ENCODE measurements at regions of chr5 and their contacts with region 1.

Region 1: DNA sequence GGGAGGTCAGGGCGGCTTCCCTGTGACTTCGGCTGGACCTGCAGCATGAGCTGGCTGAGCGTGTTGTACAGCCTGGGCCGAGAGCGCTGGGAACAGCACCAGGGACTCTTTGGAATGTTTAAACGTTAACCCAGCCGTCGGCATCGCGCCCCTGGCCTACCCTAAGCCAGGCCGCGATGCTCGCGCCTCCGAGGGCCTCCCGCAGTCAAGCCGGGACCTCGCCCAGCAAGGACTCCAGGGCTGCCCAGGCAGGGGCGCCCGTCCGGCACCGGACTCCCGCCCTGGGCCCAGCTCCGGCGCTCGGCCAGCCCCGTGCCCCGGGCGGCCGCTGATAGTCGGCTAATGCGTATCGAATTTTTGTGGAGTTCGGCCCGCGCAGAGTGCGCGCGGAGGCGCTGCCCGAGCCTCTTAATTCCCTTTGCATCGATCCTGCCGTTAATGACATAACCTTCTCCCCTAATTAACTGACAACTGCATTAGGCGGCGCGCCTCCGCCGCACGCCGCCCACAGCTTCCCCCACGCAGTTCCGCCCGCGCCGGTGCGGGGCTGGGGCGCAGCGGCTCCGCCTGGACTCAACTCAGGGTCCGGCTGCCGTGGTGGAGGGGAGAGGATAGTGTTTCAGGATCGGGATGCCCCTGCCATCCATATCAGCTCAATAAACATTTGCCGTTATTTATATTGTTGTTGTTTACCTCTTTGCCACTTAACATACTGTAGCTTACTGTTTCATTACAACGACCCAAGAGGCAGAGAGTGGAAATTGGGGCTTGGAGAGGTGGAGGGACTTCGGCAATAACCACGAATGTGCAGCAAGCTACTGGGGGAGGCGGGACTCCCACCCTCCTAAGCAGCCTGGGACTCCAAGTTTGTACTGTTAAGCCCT is 28.8 kb upstream of the CDC23 start:
- DNase-seq: no peak
- ATAC-seq: peak; percentile 83
- H3K4me3 ChIP-seq: peak overlapping the region; percentile 25
- H3K27ac ChIP-seq: no peak overlapping the region
- H3K4me1 ChIP-seq: no peaks in the 10 kb centered on the region; the same call in 1 of the 2 replicates
- H3K27me3 ChIP-seq: peaks cover 50% of the 10 kb centered on the region
- CTCF ChIP-seq: no peak
- POLR2A ChIP-seq: no peak
- RAD21 ChIP-seq: no peak

Region 2: DNA sequence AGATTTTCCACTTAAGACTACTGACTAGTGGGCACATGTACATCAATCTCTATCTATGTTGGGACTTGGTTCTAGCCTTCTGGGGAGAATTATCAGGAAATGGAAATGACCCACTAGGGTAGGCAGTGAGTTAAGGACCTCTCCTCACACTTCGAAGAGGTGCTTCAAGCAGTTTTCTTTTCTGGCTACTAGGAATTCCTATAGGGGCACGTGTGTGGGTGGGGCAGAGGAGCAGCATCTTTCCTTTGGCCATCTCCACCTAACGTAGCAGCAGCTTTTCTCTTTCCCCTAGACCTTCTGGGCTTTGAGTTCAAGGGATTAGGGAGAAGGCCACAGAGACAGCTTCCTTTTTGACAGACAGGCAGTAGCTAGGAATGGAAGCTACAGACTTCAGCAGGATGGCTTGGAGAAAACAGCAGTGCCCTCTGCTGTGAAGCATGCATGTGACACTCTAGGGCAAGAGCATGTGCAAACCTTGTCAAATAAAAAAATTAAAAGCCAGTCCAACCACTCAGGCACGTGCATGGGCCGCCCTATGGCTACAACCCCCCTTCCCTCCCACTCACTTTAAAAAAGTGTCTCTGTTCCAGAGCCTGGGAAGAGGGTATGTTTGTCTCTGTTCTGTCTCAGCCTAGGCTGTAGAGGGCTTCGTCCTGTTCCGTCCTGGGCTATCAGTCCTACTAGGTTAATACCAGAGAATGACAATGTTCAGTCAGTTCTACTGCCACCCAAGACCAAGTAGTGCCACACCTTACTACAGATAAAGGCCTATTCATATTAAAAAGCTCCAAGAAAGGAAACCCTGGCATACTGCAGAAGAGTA is 41.2 kb after region 1 on chr5:
- CTCF ChIA-PET with region 1: no interaction called
- POLR2A ChIA-PET with region 1: no interaction called
- dilution Hi-C with region 1: no loop called
- in situ Hi-C with region 1: no loop called
- intact Hi-C with region 1: loop called (anchors 5 kb)
- DNase-seq: peak; percentile 67
- ATAC-seq: peak; percentile 99
- H3K4me3 ChIP-seq: no peak overlapping the region
- H3K27ac ChIP-seq: no peak overlapping the region
- H3K4me1 ChIP-seq: no peaks in the 10 kb centered on the region
- H3K27me3 ChIP-seq: no peaks in the 10 kb centered on the region
- CTCF ChIP-seq: peak; percentile 64
- POLR2A ChIP-seq: no peak
- RAD21 ChIP-seq: peak; percentile 67